GM13977 (cell line): ENCODE measurements at regions of chr11 and their contacts with region 1.

Region 1: DNA sequence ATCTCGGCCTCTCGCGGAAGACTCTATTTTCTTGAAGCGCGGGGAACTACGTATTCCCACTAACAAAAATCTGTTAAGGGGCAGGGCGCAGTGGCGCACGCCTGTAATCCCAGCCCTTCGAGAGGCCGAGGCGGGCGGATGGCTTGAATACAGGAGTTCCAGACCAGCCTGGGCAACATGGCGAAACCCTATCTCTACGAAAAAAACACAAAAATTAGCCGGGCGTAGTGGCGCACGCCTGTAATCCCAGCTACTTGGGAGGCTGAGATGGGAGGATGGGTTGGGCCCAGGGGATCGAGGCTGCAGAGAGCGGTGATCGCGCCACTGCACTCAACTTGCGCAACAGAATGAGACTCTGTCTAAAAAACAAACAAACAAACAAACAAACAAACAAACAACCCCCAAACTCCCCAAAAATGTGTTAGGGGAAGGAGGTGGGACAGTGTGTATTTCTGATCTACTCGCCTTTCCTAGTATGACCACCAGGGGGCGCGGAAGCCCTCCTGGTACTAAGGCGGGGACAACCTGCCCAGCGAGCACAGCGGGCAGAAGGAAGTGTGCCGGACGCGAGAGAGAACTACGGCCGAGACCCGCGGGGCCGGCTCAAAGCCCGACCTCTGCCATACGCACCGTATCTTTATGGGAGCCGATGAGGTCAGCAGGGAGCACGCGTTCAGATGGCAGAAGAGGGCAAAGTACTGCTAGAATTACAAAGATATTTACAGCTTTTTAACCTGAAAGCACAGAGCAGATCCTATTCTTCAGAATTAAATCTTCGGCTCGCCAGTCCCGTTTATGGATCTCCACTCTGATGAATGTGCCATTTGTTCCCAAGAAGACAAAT is 1.3 kb upstream of the STX3 start:
- DNase-seq: peak; percentile 92
- CTCF ChIP-seq: peak; percentile 84

Region 2: DNA sequence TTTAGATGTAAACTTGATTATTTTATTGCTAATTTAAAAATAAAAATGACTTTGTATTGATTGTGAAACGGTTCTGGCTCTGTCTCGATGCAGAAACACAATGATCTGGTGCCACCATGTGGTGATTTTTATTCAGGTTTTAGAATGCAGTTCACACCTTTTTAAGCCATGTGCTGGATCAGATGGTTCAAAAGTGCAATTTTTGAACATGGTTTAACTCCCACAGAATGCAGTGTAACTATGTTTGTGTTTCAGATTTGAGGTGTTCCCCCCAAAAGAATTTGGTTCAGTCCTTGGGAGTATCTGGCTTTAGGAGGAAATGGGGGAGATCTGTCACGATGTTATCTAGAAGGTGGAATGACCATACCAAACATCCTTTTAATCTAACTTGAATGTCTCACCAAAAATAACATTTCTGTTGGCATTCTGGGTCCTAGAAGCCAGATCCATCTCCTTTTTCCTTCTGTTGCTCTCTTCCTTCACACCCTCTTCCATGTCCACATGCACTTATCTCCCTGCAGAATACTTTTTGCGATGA is 48.8 kb after region 1 on chr11:
- in situ Hi-C with region 1: loop called (anchors 10 kb)
- DNase-seq: peak; percentile 52
- CTCF ChIP-seq: peak; percentile 66